Tibial artery (tissue), 4 donors: ENCODE measurements at regions of chr10 and their contacts with region 1.

Region 1: GRCh38 chr10:27558612-27559020 is 54.5 kb downstream of the RAB18 start:
- DNase-seq: no peak
- H3K4me3 ChIP-seq: no peak overlapping the region
- H3K27ac ChIP-seq: no peak overlapping the region
- H3K4me1 ChIP-seq: no peaks in the 10 kb centered on the region
- H3K27me3 ChIP-seq: no peaks in the 10 kb centered on the region
- CTCF ChIP-seq: peak; percentile 77 to 85

Region 2: GRCh38 chr10:27661514-27662286 is 103.1 kb after region 1 on chr10:
- intact Hi-C with region 1: loop called (anchors 2 kb)
- DNase-seq: no peak
- H3K4me3 ChIP-seq: no peak overlapping the region
- H3K27ac ChIP-seq: no peak overlapping the region
- H3K4me1 ChIP-seq: no peaks in the 10 kb centered on the region
- H3K27me3 ChIP-seq: no peaks in the 10 kb centered on the region
- CTCF ChIP-seq: no peak

Region 3: GRCh38 chr10:27713927-27714326 is 155.3 kb after region 1 on chr10:
- intact Hi-C with region 1: loop called (anchors 10 kb)
- DNase-seq: no peak
- H3K4me3 ChIP-seq: peak overlapping the region; percentile 33 to 37
- H3K27ac ChIP-seq: peak overlapping the region; percentile 63 to 75
- H3K4me1 ChIP-seq: peaks cover 0 to 50% (median 13%) of the 10 kb centered on the region in 4 donors
- H3K27me3 ChIP-seq: no peaks in the 10 kb centered on the region
- CTCF ChIP-seq: no peak

Region 4: DNA sequence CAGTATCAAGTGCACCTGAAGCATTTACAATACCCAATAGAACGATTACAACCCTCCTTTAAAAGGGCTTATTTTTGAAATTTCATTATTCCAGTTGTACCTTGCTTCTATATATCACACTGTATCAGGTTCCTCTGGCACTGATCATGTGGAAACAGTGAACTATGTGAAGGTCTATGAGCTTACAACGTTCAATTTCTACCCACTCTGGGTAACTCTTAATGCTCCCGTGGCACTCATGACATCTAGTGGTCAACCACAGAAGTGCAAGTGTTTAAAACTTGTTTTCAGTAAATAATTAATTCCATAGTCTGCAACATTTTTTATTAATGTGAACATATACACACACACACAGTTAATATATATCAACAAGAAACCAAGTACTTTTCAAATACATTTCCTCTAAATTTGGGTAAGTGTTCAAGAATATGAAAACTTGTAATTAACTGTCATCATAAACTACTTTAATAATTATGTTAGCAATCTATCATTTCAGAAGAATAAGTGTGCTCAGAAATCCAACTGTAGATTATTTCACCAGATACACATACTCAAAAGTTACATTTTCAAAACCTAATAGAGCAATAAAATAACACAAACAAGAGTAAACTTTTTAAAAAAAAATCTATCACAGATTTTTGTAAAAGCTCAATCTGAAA is 683.3 kb after region 1 on chr10:
- intact Hi-C with region 1: loop called (anchors 10 kb)
- DNase-seq: no peak
- H3K4me3 ChIP-seq: no peak overlapping the region
- H3K27ac ChIP-seq: no peak overlapping the region
- H3K4me1 ChIP-seq: peaks cover 0 to 35% (median 1%) of the 10 kb centered on the region in 4 donors
- H3K27me3 ChIP-seq: no peaks in the 10 kb centered on the region
- CTCF ChIP-seq: peak; percentile 88 to 94